Gastrocnemius medialis (tissue), 4 donors: ENCODE measurements at regions of chr3 and their contacts with region 1.

Region 1: DNA sequence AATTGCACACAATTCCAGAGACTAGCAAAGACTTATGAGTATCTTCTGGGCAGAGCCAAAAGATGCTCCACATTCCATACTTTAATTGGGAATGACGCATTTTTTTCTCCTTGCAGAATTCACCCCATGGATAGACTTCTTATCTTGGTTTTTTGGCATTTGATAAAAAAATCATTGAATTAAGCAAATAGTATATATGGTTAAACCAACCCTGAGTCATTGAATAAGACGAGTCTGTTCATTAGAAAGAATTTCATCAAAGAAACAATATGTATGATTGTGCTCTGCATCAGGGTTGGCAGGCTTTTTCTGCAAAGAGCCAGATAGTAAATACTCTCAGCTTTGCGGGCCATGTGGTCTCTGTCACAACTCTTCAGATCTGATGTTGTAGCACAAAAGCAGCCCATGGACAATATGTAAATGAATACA is 9.2 kb upstream of the PDZRN3 start:
- DNase-seq: no peak
- ATAC-seq: no peak
- H3K4me3 ChIP-seq: no peak overlapping the region
- H3K27ac ChIP-seq: no peak overlapping the region
- H3K4me1 ChIP-seq: no peaks in the 10 kb centered on the region
- H3K27me3 ChIP-seq: no peaks in the 10 kb centered on the region
- CTCF ChIP-seq: no peak
- POLR2A ChIP-seq: no peak

Region 2: GRCh38 chr3:73687106-73688004 is 53.4 kb after region 1 on chr3:
- in situ Hi-C with region 1: no loop called
- intact Hi-C with region 1: no loop called
- DNase-seq: no peak
- ATAC-seq: no peak
- H3K4me3 ChIP-seq: no peak overlapping the region
- H3K27ac ChIP-seq: no peak overlapping the region
- H3K4me1 ChIP-seq: no peaks in the 10 kb centered on the region
- H3K27me3 ChIP-seq: no peaks in the 10 kb centered on the region
- CTCF ChIP-seq: no peak
- POLR2A ChIP-seq: no peak

Region 3: GRCh38 chr3:73710340-73710739 is 76.4 kb after region 1 on chr3:
- in situ Hi-C with region 1: no loop called
- intact Hi-C with region 1: loop called (anchors 5 kb)
- DNase-seq: no peak
- ATAC-seq: no peak
- H3K4me3 ChIP-seq: no peak overlapping the region
- H3K27ac ChIP-seq: no peak overlapping the region
- H3K4me1 ChIP-seq: no peaks in the 10 kb centered on the region
- H3K27me3 ChIP-seq: no peaks in the 10 kb centered on the region
- CTCF ChIP-seq: no peak
- POLR2A ChIP-seq: no peak